Activated CD4-positive, alpha-beta memory T cell treated with anti-CD3 and anti-CD28 coated beads for 36 hours (primary cell): ENCODE measurements at regions of chr6 and their contacts with region 1.

Region 1: GRCh38 chr6:57316581-57317059 is 810 bp upstream of the PRIM2 start:
- DNase-seq: peak; percentile 90
- H3K4me3 Mint-ChIP-seq: peak overlapping the region; percentile 100
- H3K27ac Mint-ChIP-seq: peak overlapping the region; percentile 98
- H3K4me1 Mint-ChIP-seq: peaks cover 28% of the 10 kb centered on the region
- H3K27me3 Mint-ChIP-seq: peaks cover 3% of the 10 kb centered on the region

Region 2: GRCh38 chr6:56359201-56359899 is 957.3 kb before region 1 on chr6:
- CTCF ChIA-PET with region 1: no interaction called
- POLR2A ChIA-PET with region 1: no interaction called
- intact Hi-C with region 1: loop called (anchors 2 kb)
- DNase-seq: peak; percentile 71
- H3K4me3 Mint-ChIP-seq: no peak overlapping the region
- H3K27ac Mint-ChIP-seq: no peak overlapping the region
- H3K4me1 Mint-ChIP-seq: peaks cover 6% of the 10 kb centered on the region
- H3K27me3 Mint-ChIP-seq: peaks cover 5% of the 10 kb centered on the region

Region 3: GRCh38 chr6:56708810-56709597 is 607.6 kb before region 1 on chr6:
- CTCF ChIA-PET with region 1: no interaction called
- POLR2A ChIA-PET with region 1: no interaction called
- intact Hi-C with region 1: loop called (anchors 1 kb)
- DNase-seq: no peak
- H3K4me3 Mint-ChIP-seq: no peak overlapping the region
- H3K27ac Mint-ChIP-seq: no peak overlapping the region
- H3K4me1 Mint-ChIP-seq: no peaks in the 10 kb centered on the region
- H3K27me3 Mint-ChIP-seq: no peaks in the 10 kb centered on the region

Region 4: GRCh38 chr6:56902641-56903464 is 413.8 kb before region 1 on chr6:
- CTCF ChIA-PET with region 1: interaction called, 153 read pairs
- POLR2A ChIA-PET with region 1: interaction called, 3 read pairs
- intact Hi-C with region 1: loop called (anchors 1 kb)
- DNase-seq: no peak
- H3K4me3 Mint-ChIP-seq: no peak overlapping the region
- H3K27ac Mint-ChIP-seq: no peak overlapping the region
- H3K4me1 Mint-ChIP-seq: no peaks in the 10 kb centered on the region
- H3K27me3 Mint-ChIP-seq: peaks cover 13% of the 10 kb centered on the region

Region 5: DNA sequence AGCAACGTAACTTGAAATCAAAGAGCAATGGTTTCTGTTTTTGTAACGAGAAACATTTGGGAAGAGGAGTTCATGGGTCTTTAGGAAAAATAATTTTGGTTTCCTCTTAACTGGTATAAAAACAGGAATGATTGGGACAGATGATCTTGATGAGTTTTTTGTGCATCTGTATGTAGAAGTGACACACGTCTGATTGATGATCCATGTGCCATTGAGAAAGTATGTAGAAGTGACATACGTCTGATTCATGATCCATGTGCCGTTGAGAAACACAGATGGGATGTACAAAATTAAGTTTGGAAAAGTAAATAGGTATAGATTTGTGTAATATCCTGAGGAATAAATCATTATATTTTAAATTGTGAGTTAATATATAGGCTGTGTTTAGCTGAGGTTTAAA is 268.0 kb before region 1 on chr6:
- CTCF ChIA-PET with region 1: interaction called, 4 read pairs
- POLR2A ChIA-PET with region 1: no interaction called
- intact Hi-C with region 1: loop called (anchors 1 kb)
- DNase-seq: no peak
- H3K4me3 Mint-ChIP-seq: peak overlapping the region; percentile 64
- H3K27ac Mint-ChIP-seq: no peak overlapping the region
- H3K4me1 Mint-ChIP-seq: peaks cover 19% of the 10 kb centered on the region
- H3K27me3 Mint-ChIP-seq: peaks cover 10% of the 10 kb centered on the region

Region 6: DNA sequence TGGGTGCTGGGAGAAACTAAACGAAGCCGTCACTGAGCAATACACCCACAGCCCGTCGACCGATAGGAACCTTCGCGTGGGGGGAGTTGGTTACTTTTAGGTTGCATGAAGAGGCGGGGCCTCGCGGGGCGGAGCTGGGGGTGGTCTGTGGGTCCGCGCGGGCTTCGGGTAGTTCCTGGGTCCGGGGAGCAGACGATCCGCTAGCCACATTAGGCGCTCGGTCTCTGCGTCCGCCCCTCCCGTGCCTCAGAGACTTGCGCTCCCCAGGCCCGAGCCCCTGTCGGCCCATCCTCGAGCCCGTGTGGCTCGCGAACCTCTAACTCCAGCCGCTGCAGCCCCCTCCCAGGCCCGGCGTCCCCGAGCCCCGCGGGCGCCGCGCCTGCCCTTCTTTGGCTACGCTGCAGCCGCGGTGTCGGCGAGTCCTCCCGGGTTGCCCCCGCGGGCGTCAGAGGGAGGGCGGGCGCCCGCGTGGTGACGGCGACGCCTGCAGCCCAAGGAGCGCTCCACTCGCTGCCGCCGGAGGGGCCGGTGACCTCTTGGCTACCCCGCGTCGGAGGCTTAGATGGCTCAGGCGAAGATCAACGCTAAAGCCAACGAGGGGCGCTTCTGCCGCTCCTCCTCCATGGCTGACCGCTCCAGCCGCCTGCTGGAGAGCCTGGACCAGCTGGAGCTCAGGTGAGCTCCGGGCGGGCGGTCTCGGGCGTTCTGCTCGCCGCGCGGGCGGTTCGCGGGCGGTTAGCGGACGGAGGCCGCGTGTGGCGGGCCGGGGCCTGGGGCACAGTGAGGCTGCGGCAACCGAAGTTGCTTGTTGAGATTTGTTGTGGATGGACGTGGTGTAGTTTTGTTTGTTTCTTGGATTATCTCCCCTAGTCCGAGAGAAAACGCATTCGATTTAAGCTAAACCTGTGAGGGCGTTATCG is 144.2 kb before region 1 on chr6 and contains the start of gene BAG2:
- CTCF ChIA-PET with region 1: interaction called, 12 read pairs
- POLR2A ChIA-PET with region 1: interaction called, 3 read pairs
- intact Hi-C with region 1: loop called (anchors 1 kb)
- DNase-seq: peak; percentile 92
- H3K4me3 Mint-ChIP-seq: peak within 1 kb of the TSS; percentile 90
- H3K27ac Mint-ChIP-seq: peak within 1 kb of the TSS; percentile 87
- H3K4me1 Mint-ChIP-seq: peaks cover 20% of the 10 kb centered on the region
- H3K27me3 Mint-ChIP-seq: no peaks in the 10 kb centered on the region
- total RNA-seq, gene BAG2: 6.8 to 7.2 TPM

Region 7: DNA sequence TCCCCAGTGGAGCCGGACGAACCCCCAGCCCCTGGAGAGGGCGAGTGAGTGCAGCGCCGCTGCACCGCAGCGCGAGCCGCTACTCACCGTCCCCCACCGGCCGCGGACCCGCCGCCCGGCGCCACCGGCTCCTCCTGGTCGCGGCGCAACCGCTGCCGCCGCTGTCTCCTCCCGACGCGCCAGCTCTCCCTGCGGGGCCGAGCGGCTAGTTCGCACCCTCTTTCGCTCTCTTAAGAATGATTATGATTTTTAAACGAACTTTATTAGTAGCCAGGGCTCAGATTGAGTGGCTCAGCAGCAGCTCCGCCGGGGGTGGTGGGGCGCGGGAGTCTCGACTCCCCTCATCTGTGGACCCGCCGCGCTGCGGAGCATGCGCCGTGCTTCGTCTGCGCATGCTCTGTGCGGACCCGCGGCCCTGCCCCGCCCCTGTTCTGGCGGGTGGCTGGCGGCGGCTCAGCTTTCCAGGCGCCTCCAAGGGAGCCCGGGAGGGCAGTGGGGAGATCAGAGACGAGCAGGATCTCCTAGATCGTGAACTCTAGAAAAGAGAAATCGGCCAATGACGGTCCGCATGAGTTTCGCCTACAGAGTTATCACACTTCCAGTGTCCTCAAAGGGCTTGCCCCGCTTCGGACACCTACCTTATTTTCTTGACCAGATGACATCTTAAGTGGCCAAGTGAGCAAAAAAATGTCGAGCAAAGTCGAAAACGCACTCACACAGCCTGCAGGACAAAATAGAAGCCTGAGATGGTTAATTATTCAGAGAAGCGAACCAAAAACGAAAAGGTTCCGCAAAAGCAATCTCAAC is 94.5 kb before region 1 on chr6 and contains the start of gene RAB23:
- CTCF ChIA-PET with region 1: interaction called, 4 read pairs
- POLR2A ChIA-PET with region 1: interaction called, 7 read pairs
- intact Hi-C with region 1: loop called (anchors 1 kb)
- DNase-seq: peak; percentile 85
- H3K4me3 Mint-ChIP-seq: peak within 1 kb of the TSS; percentile 98
- H3K27ac Mint-ChIP-seq: peak within 1 kb of the TSS; percentile 77
- H3K4me1 Mint-ChIP-seq: peaks cover 10% of the 10 kb centered on the region
- H3K27me3 Mint-ChIP-seq: peaks cover 16% of the 10 kb centered on the region
- total RNA-seq, gene RAB23: 1.7 to 2.2 TPM